Psoas muscle (tissue), 8 donors: ENCODE measurements at regions of chr7 and their contacts with region 1.

Region 1: DNA sequence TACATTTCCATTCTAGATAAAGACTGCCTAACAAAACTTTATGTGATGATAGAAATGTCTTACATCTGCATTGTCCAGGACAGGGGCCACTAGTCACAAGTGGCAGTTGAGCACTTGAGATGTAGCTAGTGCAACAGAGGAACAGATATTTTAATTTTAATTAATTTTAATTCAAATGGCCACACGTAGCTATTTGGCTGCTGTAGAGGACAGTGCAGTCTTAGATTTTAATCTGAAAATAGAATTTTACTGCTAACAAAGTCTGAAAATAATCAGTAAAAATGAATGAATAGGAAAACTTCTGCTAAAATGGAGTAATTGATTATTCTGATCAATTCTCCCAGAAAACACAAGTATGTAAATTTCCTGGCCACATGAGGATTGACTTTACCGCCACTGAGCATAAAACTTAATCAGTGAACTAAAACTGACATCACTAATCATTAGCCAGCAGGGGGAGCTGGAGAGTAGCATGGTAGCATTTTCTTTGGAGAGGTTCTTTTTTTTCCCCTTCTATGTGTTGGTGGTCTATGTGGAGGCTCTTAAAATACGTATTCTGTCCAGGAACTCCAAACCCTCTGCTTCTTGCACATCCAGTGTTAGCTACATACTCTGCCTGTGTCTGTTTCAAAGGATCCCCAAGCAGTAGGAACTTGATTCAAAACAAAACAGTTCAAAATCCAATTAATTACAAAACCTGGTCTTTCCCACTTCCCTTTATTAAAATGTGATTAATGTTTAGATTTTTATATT is 52.1 kb downstream of the TSPAN12 start:
- DNase-seq: no peak
- ATAC-seq: peak in 2 of 4 donors; percentile 68 to 73
- H3K4me3 ChIP-seq: no peak overlapping the region
- H3K27ac ChIP-seq: no peak overlapping the region
- H3K4me1 ChIP-seq: no peaks in the 10 kb centered on the region
- H3K27me3 ChIP-seq: no peaks in the 10 kb centered on the region
- CTCF ChIP-seq: peak; percentile 80

Region 2: GRCh38 chr7:120703585-120704240 is 102.1 kb before region 1 on chr7:
- intact Hi-C with region 1: no loop called
- DNase-seq: no peak
- ATAC-seq: no peak
- H3K4me3 ChIP-seq: no peak overlapping the region
- H3K27ac ChIP-seq: no peak overlapping the region
- H3K4me1 ChIP-seq: no peaks in the 10 kb centered on the region
- H3K27me3 ChIP-seq: no peaks in the 10 kb centered on the region
- CTCF ChIP-seq: no peak

Region 3: GRCh38 chr7:120842121-120842621 is 36.4 kb after region 1 on chr7:
- intact Hi-C with region 1: loop called in 1 of 2 experiments (anchors 5 kb)
- DNase-seq: no peak
- ATAC-seq: no peak
- H3K4me3 ChIP-seq: no peak overlapping the region
- H3K27ac ChIP-seq: no peak overlapping the region
- H3K4me1 ChIP-seq: no peaks in the 10 kb centered on the region
- H3K27me3 ChIP-seq: no peaks in the 10 kb centered on the region
- CTCF ChIP-seq: no peak

Region 4: DNA sequence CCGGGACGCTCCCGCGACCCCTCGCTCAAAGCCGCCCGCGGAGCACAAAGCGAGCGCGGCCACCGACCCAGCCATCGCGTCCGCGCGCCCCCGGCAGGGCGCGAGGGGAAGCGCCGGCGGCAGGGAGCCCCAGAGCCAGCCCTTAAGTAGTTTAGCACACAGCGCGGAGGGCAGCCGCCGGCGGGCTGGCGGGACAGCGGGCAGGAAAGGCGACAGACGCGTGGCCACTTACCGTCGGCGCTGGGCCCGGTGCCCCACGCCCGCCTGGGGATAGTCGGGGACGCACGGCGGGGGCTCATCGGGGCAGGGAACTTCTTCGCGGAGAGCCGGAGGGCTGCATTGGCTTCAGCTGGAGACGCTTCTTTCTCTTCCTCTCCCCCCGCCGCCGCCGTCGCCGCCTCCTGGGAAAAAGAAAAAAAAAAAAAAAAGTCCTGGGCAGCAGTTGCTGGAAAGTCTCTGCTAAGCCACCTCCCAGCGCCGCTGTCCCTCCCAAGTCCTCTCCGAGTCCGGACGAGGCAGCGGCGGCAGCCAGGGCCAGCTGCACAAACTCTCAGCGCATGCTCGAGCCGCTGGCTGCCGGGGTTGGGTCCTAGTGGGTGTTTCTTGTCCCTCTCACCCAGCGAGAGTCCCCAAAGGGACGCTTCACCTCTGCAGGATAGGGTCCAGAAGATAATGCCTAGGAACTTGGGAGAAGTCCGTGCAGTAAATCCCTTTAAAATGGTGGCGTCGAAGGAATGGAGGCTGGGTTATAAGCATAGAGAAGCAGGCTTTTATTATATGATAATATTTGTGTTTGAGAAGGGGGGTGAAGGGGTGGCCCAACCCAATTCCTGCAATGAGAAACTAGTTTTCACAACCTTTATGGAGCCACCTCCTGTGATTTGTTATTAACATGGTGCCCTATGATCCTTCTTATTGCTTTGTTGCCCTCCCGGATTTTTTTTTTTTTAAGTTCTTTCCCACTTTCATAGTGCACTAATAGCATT is 52.1 kb after region 1 on chr7 and contains the start of gene TSPAN12:
- intact Hi-C with region 1: loop called in 1 of 2 experiments (anchors 5 kb)
- DNase-seq: peak; percentile 82 to 89
- ATAC-seq: peak; percentile 88 to 96 (median 94)
- H3K4me3 ChIP-seq: peak within 1 kb of the TSS; percentile 83
- H3K27ac ChIP-seq: peak within 1 kb of the TSS; percentile 83
- H3K4me1 ChIP-seq: no peaks in the 10 kb centered on the region
- H3K27me3 ChIP-seq: no peaks in the 10 kb centered on the region
- CTCF ChIP-seq: peak; percentile 71
- total RNA-seq, gene TSPAN12: 1.6 to 3.8 (median 2.5) TPM

Region 5: DNA sequence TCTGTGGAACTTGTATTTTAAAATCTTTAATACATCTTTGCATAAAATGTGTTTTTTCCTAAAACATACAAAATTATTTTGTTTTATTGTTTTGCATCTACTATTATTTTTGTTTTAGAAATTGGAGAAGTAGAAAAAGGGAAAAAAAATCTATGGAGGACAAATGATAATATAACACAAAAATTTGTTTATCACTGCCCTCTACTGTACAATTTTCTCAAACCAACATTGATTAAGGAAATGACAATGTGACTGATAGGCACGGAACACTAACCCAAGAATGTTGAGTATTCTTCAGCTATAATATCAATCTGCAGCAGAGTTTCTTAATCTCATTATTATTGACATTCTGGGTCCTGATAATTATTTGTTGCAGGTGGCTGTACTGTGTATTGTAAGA is 135.3 kb after region 1 on chr7:
- intact Hi-C with region 1: loop called (anchors 2 to 5 kb)
- DNase-seq: no peak
- ATAC-seq: no peak
- H3K4me3 ChIP-seq: no peak overlapping the region
- H3K27ac ChIP-seq: no peak overlapping the region
- H3K4me1 ChIP-seq: no peaks in the 10 kb centered on the region
- H3K27me3 ChIP-seq: no peaks in the 10 kb centered on the region
- CTCF ChIP-seq: peak; percentile 41

Region 6: GRCh38 chr7:121102619-121103018 is 296.8 kb after region 1 on chr7:
- intact Hi-C with region 1: loop called (anchors 2 to 5 kb)
- DNase-seq: no peak
- ATAC-seq: peak in 2 of 4 donors; percentile 52 to 57
- H3K4me3 ChIP-seq: no peak overlapping the region
- H3K27ac ChIP-seq: peak overlapping the region; percentile 37
- H3K4me1 ChIP-seq: peaks cover 15% of the 10 kb centered on the region
- H3K27me3 ChIP-seq: no peaks in the 10 kb centered on the region
- CTCF ChIP-seq: no peak